K562 (cell line): ENCODE measurements at regions of chr19 and their contacts with region 1.

Region 1: DNA sequence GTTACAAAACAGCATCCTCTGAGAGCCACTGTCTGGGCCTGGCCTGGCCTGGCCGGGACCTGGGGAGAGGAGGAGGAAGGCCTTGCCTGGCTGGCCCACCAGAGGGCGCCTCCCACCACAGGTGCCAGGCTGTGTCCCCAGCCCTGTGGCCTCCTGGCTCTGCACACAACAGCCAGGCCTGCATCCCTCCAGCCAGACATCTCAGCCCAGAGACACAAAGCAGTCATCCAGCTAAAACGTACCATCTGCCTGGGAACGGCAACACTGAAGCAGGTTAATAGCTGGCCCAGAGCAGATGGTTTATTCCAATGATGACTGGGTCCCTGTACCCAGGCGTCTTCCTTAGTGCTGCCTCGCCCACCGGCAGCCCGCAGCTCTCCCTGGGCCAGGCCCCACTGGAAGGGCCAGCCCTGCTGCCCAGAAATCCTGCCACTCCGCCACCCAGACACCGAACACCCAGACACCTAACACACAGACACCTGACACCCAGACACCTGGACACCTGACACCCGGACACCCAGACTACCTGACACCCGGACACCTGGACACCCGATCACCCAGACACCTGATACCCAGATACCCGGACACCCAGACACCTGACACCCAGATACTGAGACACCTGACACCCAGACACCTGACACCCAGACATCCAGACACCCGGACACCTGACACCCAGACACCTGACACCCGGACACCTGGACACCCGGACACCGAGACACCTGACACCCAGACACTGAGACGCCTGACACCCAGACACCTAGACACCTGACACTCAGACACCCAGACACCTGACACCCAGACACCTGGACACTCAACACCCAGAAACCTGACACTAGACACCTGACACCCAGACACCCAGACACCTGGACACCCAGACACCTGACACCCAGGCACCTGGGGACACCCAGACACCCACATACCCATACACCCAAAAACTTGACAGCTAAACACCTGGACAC is 20.1 kb downstream of the C19orf12 start:
- DNase-seq: peak; percentile 59 to 70 (median 68)
- ATAC-seq: peak; percentile 95
- H3K4me3 ChIP-seq: no peak overlapping the region
- H3K27ac ChIP-seq: no peak overlapping the region
- H3K4me1 ChIP-seq: peaks cover 5 to 6% of the 10 kb centered on the region in 2 experiments; a peak in 3 of 5 replicates
- H3K27me3 ChIP-seq: no peaks in the 10 kb centered on the region
- CTCF ChIP-seq: peak; percentile 77 to 82 (median 78)
- EP300 ChIP-seq: no peak
- POLR2A ChIP-seq: no peak
- RAD21 ChIP-seq: peak; percentile 53 to 75

Region 2: GRCh38 chr19:29467824-29468401 is 227.0 kb before region 1 on chr19:
- CTCF ChIA-PET with region 1: interaction called, 5 read pairs
- POLR2A ChIA-PET with region 1: no interaction called
- in situ Hi-C with region 1: no loop called
- intact Hi-C with region 1: loop called (anchors 5 kb)
- DNase-seq: peak in 2 of 4 experiments; percentile 44 to 54
- ATAC-seq: peak; percentile 93
- H3K4me3 ChIP-seq: no peak overlapping the region
- H3K27ac ChIP-seq: no peak overlapping the region
- H3K4me1 ChIP-seq: no peaks in the 10 kb centered on the region
- H3K27me3 ChIP-seq: no peaks in the 10 kb centered on the region
- CTCF ChIP-seq: peak; percentile 66 to 72 (median 69)
- EP300 ChIP-seq: no peak
- POLR2A ChIP-seq: no peak
- RAD21 ChIP-seq: peak; percentile 38 to 69

Region 3: GRCh38 chr19:29528350-29528945 is 166.5 kb before region 1 on chr19:
- CTCF ChIA-PET with region 1: no interaction called
- POLR2A ChIA-PET with region 1: no interaction called
- in situ Hi-C with region 1: no loop called
- intact Hi-C with region 1: loop called (anchors 5 kb)
- DNase-seq: peak; percentile 60 to 78 (median 77)
- ATAC-seq: peak; percentile 95
- H3K4me3 ChIP-seq: no peak overlapping the region
- H3K27ac ChIP-seq: no peak overlapping the region
- H3K4me1 ChIP-seq: peaks cover 0 to 43% of the 10 kb centered on the region in 2 experiments; a peak in 2 of 5 replicates
- H3K27me3 ChIP-seq: peaks cover 0 to 31% of the 10 kb centered on the region in 2 experiments; a peak in 2 of 5 replicates
- CTCF ChIP-seq: peak; percentile 74 to 88 (median 76)
- EP300 ChIP-seq: no peak
- POLR2A ChIP-seq: no peak
- RAD21 ChIP-seq: peak; percentile 24 to 75

Region 4: DNA sequence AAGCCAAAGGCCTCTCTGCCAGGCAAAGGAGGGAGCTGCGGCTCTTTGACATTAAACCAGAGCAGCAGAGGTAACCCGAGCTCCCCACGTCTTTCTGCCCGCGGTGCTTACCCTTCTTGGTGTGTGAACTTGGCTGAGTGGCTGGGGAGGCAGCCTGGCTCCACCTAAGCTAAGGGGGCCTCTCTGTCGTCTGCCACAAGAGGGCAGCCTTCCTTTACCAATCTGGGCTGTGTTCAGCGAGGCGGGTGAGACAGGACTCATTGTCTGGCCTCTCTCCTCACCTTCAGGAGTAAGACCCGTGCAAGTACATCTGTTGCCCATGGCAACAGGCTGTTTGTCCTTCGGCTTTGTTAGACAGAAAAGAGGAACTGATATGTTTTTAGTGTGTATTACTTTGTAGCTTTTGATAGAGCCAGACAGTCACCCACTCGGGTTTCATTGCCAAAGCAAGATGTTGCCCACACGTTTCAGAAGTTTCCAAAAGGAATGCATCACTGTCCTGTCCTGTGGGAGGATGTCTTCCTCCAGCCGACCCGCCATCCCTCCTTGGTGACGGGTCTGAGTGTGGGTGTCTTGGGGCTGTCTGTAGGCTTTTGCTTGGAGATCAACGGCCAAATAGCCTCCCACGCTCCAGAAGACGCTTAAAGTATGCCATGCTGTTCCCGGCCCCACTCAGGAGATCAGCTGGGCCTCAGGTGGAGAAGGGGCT is 84.2 kb before region 1 on chr19:
- CTCF ChIA-PET with region 1: interaction called, 40 read pairs
- POLR2A ChIA-PET with region 1: interaction called, 3 read pairs
- in situ Hi-C with region 1: loop called (anchors 5 kb)
- intact Hi-C with region 1: loop called (anchors 1 kb)
- DNase-seq: peak; percentile 69 to 88 (median 78)
- ATAC-seq: peak; percentile 92
- H3K4me3 ChIP-seq: no peak overlapping the region
- H3K27ac ChIP-seq: no peak overlapping the region
- H3K4me1 ChIP-seq: peaks cover 0 to 10% of the 10 kb centered on the region in 2 experiments; a peak in 2 of 5 replicates
- H3K27me3 ChIP-seq: no peaks in the 10 kb centered on the region
- CTCF ChIP-seq: peak; percentile 90 to 94 (median 92)
- EP300 ChIP-seq: no peak
- POLR2A ChIP-seq: no peak
- RAD21 ChIP-seq: peak; percentile 97 to 99

Region 5: DNA sequence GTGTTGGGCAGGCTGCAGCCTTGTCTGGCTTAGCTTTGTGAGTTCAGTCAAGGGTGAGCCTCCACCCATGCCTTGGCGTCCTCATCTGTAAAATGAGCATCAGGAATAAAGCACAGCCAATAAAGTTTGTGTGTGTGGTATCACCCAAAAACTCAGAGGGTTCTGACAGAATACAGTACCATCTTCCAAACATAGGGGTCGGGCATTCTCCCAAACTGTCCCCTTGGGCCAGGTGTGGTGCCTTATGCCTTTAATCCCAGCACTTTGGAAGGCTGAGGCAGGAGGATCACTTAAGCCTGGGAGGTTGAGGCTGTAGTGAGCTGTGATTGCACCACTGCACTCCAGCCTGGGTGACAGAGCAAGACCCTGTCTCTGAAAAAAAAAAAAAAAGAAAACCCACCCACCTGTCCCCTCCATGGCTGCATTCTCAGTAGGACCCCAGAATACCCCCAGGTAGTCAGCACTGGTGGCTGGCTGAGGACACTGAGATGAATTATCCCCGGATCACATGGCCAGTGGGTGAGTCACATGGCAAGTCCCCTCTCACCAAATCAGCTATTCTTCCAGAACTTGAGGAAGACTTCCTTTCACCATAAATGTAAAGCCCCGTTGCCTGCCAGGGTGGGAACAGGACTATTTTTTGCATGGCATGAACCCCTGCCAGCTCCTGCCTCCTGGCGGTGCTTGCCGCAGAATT is 70.3 kb before region 1 on chr19:
- CTCF ChIA-PET with region 1: no interaction called
- POLR2A ChIA-PET with region 1: no interaction called
- in situ Hi-C with region 1: no loop called
- intact Hi-C with region 1: loop called (anchors 5 kb)
- DNase-seq: no peak
- ATAC-seq: peak; percentile 5; the same call in 1 of the 3 replicates
- H3K4me3 ChIP-seq: no peak overlapping the region
- H3K27ac ChIP-seq: no peak overlapping the region; the same call in 2 of the 3 replicates
- H3K4me1 ChIP-seq: peaks cover 22 to 38% of the 10 kb centered on the region in 2 experiments
- H3K27me3 ChIP-seq: no peaks in the 10 kb centered on the region
- CTCF ChIP-seq: peak in 2 of 3 experiments; percentile 11; a peak in 1 of 6 replicates
- EP300 ChIP-seq: no peak
- POLR2A ChIP-seq: no peak
- RAD21 ChIP-seq: no peak

Region 6: DNA sequence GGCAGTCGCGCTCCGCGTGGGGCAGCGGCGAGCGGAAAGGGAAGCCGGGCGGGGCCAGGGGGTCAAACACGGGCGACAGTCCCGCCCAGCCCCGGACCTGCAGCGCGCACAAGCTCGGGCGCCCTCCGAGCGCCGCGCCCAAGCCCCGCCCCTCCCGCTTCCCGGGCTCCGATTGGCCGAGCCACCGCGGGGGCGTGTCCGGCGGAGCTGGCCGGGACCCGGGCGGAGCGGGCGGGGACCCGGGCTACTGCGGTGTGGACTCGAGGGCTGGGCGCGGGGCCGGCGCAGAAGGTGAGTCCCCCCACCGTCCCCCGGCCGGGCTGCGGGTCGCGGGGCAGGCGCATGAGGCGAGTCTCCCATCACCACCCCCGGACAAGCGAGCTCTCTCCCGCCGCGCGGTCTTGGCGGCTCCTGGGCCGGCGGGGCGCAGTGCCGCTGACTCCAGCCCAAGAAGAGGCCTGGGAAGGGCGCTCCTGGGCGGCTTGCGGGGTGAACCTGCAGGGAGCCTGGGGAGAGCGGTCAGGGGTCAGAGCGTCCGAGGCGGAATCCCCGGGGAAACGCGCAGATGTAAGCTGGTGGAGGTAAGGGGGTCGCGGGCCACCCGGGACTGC is 29.6 kb before region 1 on chr19 and contains the start of gene PLEKHF1:
- CTCF ChIA-PET with region 1: interaction called, 3 read pairs
- POLR2A ChIA-PET with region 1: interaction called, 3 read pairs
- in situ Hi-C with region 1: no loop called
- intact Hi-C with region 1: loop called (anchors 1 kb)
- DNase-seq: peak; percentile 93 to 97 (median 96)
- ATAC-seq: peak; percentile 95
- H3K4me3 ChIP-seq: peak within 1 kb of the TSS; percentile 78
- H3K27ac ChIP-seq: peak within 1 kb of the TSS; percentile 83
- H3K4me1 ChIP-seq: peaks cover 52 to 71% of the 10 kb centered on the region in 2 experiments
- H3K27me3 ChIP-seq: no peaks in the 10 kb centered on the region
- CTCF ChIP-seq: peak in 1 of 3 experiments; percentile 49; a peak in 3 of 6 replicates
- EP300 ChIP-seq: no peak
- POLR2A ChIP-seq: peak; percentile 71
- RAD21 ChIP-seq: peak; percentile 32 to 54
- polyA plus RNA-seq, gene PLEKHF1: 0.07 TPM in 1 of 2 experiments, not detected in the other

Region 7: DNA sequence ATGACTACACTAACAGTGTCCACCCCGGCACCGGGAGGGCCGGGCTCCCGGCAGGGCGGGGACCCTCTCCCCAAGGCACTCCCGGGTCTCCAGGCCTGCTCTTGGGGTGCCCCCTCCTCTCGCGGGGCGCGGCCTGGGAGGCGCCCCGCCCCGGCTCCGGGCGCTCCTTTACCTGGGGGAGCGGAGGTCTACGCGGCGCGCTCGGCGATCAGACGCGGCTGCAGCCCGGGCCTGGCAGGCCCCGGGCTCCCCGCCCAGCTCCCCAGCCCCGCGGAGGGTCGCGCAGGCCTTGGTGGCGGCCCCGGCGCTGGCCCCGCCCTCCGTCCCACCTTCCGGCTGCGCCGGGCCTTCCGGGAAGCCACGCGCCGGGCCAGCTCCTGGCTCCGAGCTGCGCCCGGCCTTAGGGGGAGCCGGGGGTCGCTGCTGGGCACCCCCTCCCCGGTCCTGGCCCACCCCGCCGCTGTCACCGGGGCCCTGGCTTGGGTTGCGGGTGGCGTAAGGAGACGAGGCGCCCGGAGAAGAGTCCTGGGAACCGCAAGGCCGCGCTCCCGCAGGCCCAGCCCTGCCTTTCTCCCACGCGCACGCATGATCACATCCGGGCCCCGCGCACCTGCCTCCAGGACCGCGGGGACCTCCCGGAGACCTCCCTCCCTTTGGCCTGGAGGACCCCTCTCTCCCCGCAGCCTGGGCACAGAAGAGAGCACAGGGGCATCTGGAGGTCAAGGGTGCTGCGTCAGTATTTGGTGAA is 20.2 kb after region 1 on chr19 and contains the start of gene C19orf12:
- CTCF ChIA-PET with region 1: interaction called, 3 read pairs
- POLR2A ChIA-PET with region 1: no interaction called
- in situ Hi-C with region 1: no loop called
- intact Hi-C with region 1: loop called (anchors 1 kb)
- DNase-seq: peak; percentile 68 to 87 (median 79)
- ATAC-seq: peak; percentile 87
- H3K4me3 ChIP-seq: peak within 1 kb of the TSS; percentile 95
- H3K27ac ChIP-seq: peak within 1 kb of the TSS; percentile 83
- H3K4me1 ChIP-seq: peaks cover 7 to 31% of the 10 kb centered on the region in 2 experiments; a peak in 4 of 5 replicates
- H3K27me3 ChIP-seq: peaks cover 0 to 2% of the 10 kb centered on the region in 2 experiments; a peak in 2 of 5 replicates
- CTCF ChIP-seq: no peak
- EP300 ChIP-seq: no peak
- POLR2A ChIP-seq: peak; percentile 86
- RAD21 ChIP-seq: no peak
- polyA plus RNA-seq, gene C19orf12: 1.9 to 2.8 TPM